CD4-positive, alpha-beta memory T cell (primary cell): ENCODE measurements at regions of chr5 and their contacts with region 1.

Region 1: GRCh38 chr5:142655339-142656267 is 30.3 kb downstream of the FGF1 start:
- DNase-seq: peak in 4 of 5 donors; percentile 46 to 62 (median 54)
- H3K4me3 ChIP-seq: no peak overlapping the region
- H3K4me3 Mint-ChIP-seq: no peak overlapping the region
- H3K27ac ChIP-seq: no peak overlapping the region
- H3K27ac Mint-ChIP-seq: no peak overlapping the region
- H3K4me1 ChIP-seq: no peaks in the 10 kb centered on the region
- H3K4me1 Mint-ChIP-seq: peaks cover 0 to 9% (median 3%) of the 10 kb centered on the region in 4 donors
- H3K27me3 ChIP-seq: no peaks in the 10 kb centered on the region
- H3K27me3 Mint-ChIP-seq: peaks cover 4 to 19% of the 10 kb centered on the region in 2 donors

Region 2: GRCh38 chr5:142644640-142645361 is 10.8 kb before region 1 on chr5:
- CTCF ChIA-PET with region 1: interaction called, 22 read pairs
- POLR2A ChIA-PET with region 1: no interaction called
- intact Hi-C with region 1: no loop called
- DNase-seq: no peak
- H3K4me3 ChIP-seq: no peak overlapping the region
- H3K4me3 Mint-ChIP-seq: no peak overlapping the region
- H3K27ac ChIP-seq: no peak overlapping the region
- H3K27ac Mint-ChIP-seq: no peak overlapping the region
- H3K4me1 ChIP-seq: no peaks in the 10 kb centered on the region
- H3K4me1 Mint-ChIP-seq: peaks cover 0 to 2% (median 0%) of the 10 kb centered on the region in 4 donors
- H3K27me3 ChIP-seq: no peaks in the 10 kb centered on the region
- H3K27me3 Mint-ChIP-seq: peaks cover 11 to 13% of the 10 kb centered on the region in 2 donors

Region 3: DNA sequence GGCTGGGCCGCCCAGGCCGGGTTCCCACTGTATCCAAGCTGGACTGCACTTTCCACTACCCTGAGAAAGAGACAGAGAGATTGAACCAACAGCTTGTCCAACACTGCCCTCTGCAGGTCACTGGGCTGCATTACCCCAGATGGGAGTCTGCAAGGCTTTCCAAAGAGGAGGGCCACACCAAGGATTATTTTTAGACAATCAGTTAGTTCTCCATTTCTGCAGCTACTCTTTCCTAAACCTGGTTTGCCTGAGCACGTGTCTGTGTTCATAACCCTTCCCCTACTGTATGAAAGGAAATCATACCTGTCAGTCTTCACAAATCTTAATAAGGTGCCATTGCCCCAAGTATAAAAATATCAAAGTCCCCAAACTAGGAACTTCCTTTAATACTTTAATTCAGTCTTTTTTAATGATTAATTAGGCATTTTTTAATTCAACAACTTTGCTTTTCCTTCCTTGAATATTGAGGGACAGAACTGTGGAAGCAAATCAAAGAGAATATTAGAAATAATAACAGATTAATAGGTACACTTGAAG is 43.6 kb after region 1 on chr5:
- CTCF ChIA-PET with region 1: interaction called, 61 read pairs
- POLR2A ChIA-PET with region 1: no interaction called
- intact Hi-C with region 1: loop called (anchors 1 kb)
- DNase-seq: peak; percentile 68 to 73 (median 72)
- H3K4me3 ChIP-seq: no peak overlapping the region
- H3K4me3 Mint-ChIP-seq: no peak overlapping the region
- H3K27ac ChIP-seq: no peak overlapping the region
- H3K27ac Mint-ChIP-seq: no peak overlapping the region
- H3K4me1 ChIP-seq: no peaks in the 10 kb centered on the region
- H3K4me1 Mint-ChIP-seq: peaks cover 0 to 2% (median under 1%) of the 10 kb centered on the region in 4 donors
- H3K27me3 ChIP-seq: no peaks in the 10 kb centered on the region
- H3K27me3 Mint-ChIP-seq: peaks cover 2% of the 10 kb centered on the region in 2 donors

Region 4: GRCh38 chr5:142881076-142881783 is 225.6 kb after region 1 on chr5:
- CTCF ChIA-PET with region 1: interaction called, 23 read pairs
- POLR2A ChIA-PET with region 1: no interaction called
- intact Hi-C with region 1: no loop called
- DNase-seq: no peak
- H3K4me3 ChIP-seq: no peak overlapping the region
- H3K4me3 Mint-ChIP-seq: no peak overlapping the region
- H3K27ac ChIP-seq: no peak overlapping the region
- H3K27ac Mint-ChIP-seq: peak overlapping the region in 1 of 7 donors; percentile 25
- H3K4me1 ChIP-seq: no peaks in the 10 kb centered on the region
- H3K4me1 Mint-ChIP-seq: peaks cover 0 to 3% (median 1%) of the 10 kb centered on the region in 4 donors
- H3K27me3 ChIP-seq: no peaks in the 10 kb centered on the region
- H3K27me3 Mint-ChIP-seq: no peaks in the 10 kb centered on the region

Region 5: DNA sequence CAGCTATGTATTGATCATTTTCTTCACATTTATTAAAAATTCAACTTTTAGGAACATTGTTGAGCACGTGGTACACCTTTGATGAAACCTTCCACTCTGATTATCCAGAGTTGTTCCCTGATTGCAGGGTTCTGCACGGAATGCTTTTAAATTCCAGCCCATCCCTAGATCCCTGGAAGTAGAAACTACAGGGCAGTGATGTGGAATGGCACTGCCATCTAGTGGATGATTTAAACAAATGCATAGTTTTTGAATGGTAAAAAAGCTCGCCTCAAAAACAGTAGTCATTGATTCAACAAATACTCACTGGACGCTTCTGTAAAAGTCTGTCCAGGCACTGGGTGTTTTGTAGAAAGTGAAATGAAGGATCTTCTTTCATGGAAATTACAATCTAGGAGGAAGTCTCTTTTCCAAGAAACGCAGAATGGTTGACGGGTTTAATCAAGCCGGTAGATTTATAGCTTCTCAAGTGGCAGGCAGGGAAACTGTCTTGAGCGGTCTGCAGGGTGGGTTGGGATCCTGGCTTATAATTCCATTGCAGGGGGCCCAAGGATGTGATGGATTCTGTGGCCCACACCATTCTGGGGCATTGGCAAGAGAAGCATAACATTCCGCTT is 233.0 kb after region 1 on chr5:
- CTCF ChIA-PET with region 1: interaction called, 14 read pairs
- POLR2A ChIA-PET with region 1: no interaction called
- intact Hi-C with region 1: loop called (anchors 1 kb)
- DNase-seq: peak in 4 of 5 donors; percentile 13 to 26 (median 20)
- H3K4me3 ChIP-seq: no peak overlapping the region
- H3K4me3 Mint-ChIP-seq: no peak overlapping the region
- H3K27ac ChIP-seq: no peak overlapping the region
- H3K27ac Mint-ChIP-seq: peak overlapping the region in 1 of 7 donors; percentile 39
- H3K4me1 ChIP-seq: no peaks in the 10 kb centered on the region
- H3K4me1 Mint-ChIP-seq: peaks cover 0 to 4% (median under 1%) of the 10 kb centered on the region in 4 donors
- H3K27me3 ChIP-seq: no peaks in the 10 kb centered on the region
- H3K27me3 Mint-ChIP-seq: no peaks in the 10 kb centered on the region

Region 6: DNA sequence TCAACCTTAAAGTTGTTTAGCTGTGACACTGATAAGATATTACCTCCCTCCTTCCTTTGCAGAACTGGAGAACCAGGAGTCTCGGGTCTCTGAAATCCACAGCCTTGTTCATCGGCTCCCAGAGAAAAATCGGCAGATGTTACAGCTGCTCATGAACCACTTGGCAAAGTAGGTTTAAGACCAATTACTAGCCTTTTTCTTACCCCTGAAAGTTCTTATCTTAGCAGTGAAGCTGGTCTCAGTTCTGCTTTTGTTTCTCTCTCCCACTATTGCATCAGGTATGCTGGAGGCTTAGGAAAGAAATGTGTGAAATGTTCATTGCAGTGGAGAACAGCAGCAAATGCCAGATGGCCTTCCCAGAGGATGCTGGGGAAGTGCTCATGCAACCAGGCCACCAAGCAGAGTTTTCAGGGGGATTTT is 402.0 kb after region 1 on chr5:
- CTCF ChIA-PET with region 1: no interaction called
- POLR2A ChIA-PET with region 1: no interaction called
- intact Hi-C with region 1: no loop called
- DNase-seq: no peak
- H3K4me3 ChIP-seq: no peak overlapping the region
- H3K4me3 Mint-ChIP-seq: no peak overlapping the region
- H3K27ac ChIP-seq: no peak overlapping the region
- H3K27ac Mint-ChIP-seq: peak overlapping the region in 1 of 7 donors; percentile 49
- H3K4me1 ChIP-seq: peaks cover 24% of the 10 kb centered on the region
- H3K4me1 Mint-ChIP-seq: peaks cover 22 to 42% (median 31%) of the 10 kb centered on the region in 4 donors
- H3K27me3 ChIP-seq: no peaks in the 10 kb centered on the region
- H3K27me3 Mint-ChIP-seq: no peaks in the 10 kb centered on the region

Region 7: DNA sequence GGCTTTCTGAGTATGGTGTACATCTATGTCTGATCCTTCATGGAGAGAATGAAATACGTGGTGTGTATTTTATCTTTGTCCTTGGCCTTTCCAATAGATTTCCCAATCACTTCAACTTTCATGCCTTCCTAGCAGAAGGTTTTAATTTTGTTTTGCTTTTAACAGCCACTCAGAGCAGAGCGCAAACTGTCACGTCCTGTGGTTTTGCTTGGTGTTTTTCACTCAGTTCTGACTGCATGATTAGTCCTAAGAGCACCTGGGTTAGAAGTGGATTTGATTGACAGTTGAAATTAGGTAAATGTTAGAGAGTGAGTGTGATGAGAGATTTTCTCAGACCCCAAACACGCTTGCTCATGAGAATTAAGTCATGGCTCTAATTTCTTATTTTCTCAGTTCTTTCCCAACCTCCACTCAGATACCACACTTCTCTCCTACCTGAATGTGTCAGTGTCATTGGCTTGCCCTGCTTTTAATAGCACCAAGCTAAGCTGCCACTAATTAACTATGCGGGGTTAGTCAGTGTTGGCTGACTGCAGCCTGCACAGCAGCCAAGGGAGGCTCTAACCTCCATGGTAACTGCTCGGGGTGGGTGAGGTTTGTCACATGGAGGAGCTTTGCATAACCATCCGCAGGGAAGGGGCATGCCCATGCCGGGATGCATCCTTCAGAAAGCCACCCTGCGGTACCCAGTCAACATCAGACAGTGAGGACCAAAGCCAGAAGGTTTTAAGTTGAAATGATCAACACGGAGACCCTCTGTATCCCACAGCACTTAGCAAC is 574.5 kb after region 1 on chr5:
- CTCF ChIA-PET with region 1: no interaction called
- POLR2A ChIA-PET with region 1: no interaction called
- intact Hi-C with region 1: no loop called
- DNase-seq: peak; percentile 54 to 71 (median 67)
- H3K4me3 ChIP-seq: peak overlapping the region in 1 of 2 donors; percentile 31
- H3K4me3 Mint-ChIP-seq: peak overlapping the region; percentile 60 to 81 (median 79)
- H3K27ac ChIP-seq: peak overlapping the region; percentile 57
- H3K27ac Mint-ChIP-seq: peak overlapping the region; percentile 69 to 97 (median 88)
- H3K4me1 ChIP-seq: peaks cover 28% of the 10 kb centered on the region
- H3K4me1 Mint-ChIP-seq: peaks cover 18 to 37% (median 33%) of the 10 kb centered on the region in 4 donors
- H3K27me3 ChIP-seq: no peaks in the 10 kb centered on the region
- H3K27me3 Mint-ChIP-seq: no peaks in the 10 kb centered on the region